ENCODE measurements at regions of chr12 and their contacts with region 1.

Region 1: GRCh38 chr12:64744422-64745258 is 14.6 kb downstream of the GNS start:
- DNase-seq: peak in 1 of 2 experiments; percentile 42
- H3K4me3 ChIP-seq: no peak overlapping the region
- H3K4me3 Mint-ChIP-seq: no peak overlapping the region
- H3K27ac Mint-ChIP-seq: peak overlapping the region; percentile 35
- H3K4me1 ChIP-seq: peaks cover 21% of the 10 kb centered on the region
- H3K4me1 Mint-ChIP-seq: peaks cover 11% of the 10 kb centered on the region
- H3K27me3 ChIP-seq: no peaks in the 10 kb centered on the region
- H3K27me3 Mint-ChIP-seq: no peaks in the 10 kb centered on the region
- CTCF ChIP-seq: no peak

Region 2: GRCh38 chr12:64551698-64552097 is 192.9 kb before region 1 on chr12:
- CTCF ChIA-PET with region 1: no interaction called
- POLR2A ChIA-PET with region 1: no interaction called
- intact Hi-C with region 1: no loop called
- DNase-seq: no peak
- H3K4me3 ChIP-seq: no peak overlapping the region
- H3K4me3 Mint-ChIP-seq: no peak overlapping the region
- H3K27ac Mint-ChIP-seq: no peak overlapping the region
- H3K4me1 ChIP-seq: no peaks in the 10 kb centered on the region
- H3K4me1 Mint-ChIP-seq: no peaks in the 10 kb centered on the region
- H3K27me3 ChIP-seq: no peaks in the 10 kb centered on the region
- H3K27me3 Mint-ChIP-seq: no peaks in the 10 kb centered on the region
- CTCF ChIP-seq: no peak

Region 3: GRCh38 chr12:64682572-64683277 is 61.9 kb before region 1 on chr12:
- CTCF ChIA-PET with region 1: no interaction called
- POLR2A ChIA-PET with region 1: no interaction called
- intact Hi-C with region 1: no loop called
- DNase-seq: no peak
- H3K4me3 ChIP-seq: no peak overlapping the region
- H3K4me3 Mint-ChIP-seq: no peak overlapping the region
- H3K27ac Mint-ChIP-seq: no peak overlapping the region
- H3K4me1 ChIP-seq: peaks cover 34% of the 10 kb centered on the region
- H3K4me1 Mint-ChIP-seq: peaks cover 7% of the 10 kb centered on the region
- H3K27me3 ChIP-seq: no peaks in the 10 kb centered on the region
- H3K27me3 Mint-ChIP-seq: no peaks in the 10 kb centered on the region
- CTCF ChIP-seq: no peak

Region 4: DNA sequence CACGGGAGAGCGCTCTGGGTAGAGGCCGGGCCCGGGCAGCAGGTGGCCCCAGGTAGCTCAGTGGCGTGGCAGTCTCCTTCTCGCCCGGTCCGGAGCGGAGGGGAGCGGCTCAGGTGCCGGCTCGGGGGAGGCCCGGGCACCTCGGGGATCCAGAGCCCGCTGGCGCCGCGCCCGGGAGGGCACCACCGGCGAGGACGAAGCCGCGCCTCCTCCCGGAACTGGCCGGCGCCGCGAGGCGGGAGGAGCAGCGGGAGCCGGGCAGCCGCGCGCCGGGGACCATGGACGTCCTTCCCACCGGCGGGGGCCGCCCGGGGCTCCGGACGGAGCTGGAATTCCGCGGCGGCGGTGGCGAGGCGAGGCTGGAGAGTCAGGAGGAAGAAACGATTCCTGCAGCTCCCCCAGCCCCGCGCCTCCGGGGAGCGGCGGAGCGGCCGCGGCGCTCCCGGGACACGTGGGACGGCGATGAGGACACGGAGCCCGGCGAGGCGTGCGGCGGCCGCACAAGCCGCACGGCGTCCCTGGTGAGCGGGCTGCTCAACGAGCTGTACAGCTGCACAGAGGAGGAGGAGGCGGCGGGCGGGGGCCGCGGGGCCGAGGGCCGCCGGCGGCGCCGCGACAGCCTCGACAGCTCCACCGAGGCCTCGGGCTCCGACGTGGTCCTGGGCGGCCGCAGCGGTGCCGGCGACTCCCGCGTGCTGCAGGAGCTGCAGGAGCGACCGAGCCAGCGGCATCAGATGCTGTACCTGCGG is 36.1 kb after region 1 on chr12:
- CTCF ChIA-PET with region 1: interaction called, 5 read pairs
- POLR2A ChIA-PET with region 1: no interaction called
- intact Hi-C with region 1: loop called (anchors 5 kb)
- DNase-seq: peak; percentile 64 to 75
- H3K4me3 ChIP-seq: peak overlapping the region; percentile 49
- H3K4me3 Mint-ChIP-seq: peak overlapping the region; percentile 90
- H3K27ac Mint-ChIP-seq: peak overlapping the region; percentile 80
- H3K4me1 ChIP-seq: peaks cover 19% of the 10 kb centered on the region
- H3K4me1 Mint-ChIP-seq: peaks cover 7% of the 10 kb centered on the region
- H3K27me3 ChIP-seq: no peaks in the 10 kb centered on the region
- H3K27me3 Mint-ChIP-seq: no peaks in the 10 kb centered on the region
- CTCF ChIP-seq: peak in 1 of 2 experiments; percentile 24

Measured in Caco-2 (cell line).